ENCODE measurements at regions of chr1 and their contacts with region 1.

Region 1: DNA sequence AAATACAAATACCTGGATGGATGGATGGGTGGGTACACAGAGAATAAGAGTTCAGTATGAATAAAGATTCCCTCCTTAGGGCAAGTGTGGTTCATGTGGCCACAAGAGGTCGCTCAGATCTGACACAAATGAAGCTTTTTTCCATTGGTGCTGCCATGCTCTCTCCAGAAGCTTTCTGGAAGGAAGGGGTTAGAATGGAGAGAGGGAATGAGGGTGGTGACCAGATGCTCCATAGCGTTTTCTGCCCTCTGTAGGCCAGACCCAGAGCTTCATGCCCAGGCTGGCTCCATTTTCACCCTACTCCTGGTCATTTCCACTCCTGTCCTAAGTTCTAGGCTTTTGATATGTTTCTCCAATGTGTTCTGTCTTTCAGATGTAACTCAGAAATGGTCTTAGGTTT is 3.3 kb upstream of the FCRL6 start:
- DNase-seq: peak; percentile 72
- H3K4me3 ChIP-seq: no peak overlapping the region
- H3K27ac ChIP-seq: no peak overlapping the region
- H3K4me1 ChIP-seq: no peaks in the 10 kb centered on the region
- H3K27me3 ChIP-seq: peaks cover 10% of the 10 kb centered on the region; the same call in 1 of the 2 replicates
- CTCF ChIP-seq: peak; percentile 87
- EP300 ChIP-seq: no peak
- RAD21 ChIP-seq: peak; percentile 88

Region 2: DNA sequence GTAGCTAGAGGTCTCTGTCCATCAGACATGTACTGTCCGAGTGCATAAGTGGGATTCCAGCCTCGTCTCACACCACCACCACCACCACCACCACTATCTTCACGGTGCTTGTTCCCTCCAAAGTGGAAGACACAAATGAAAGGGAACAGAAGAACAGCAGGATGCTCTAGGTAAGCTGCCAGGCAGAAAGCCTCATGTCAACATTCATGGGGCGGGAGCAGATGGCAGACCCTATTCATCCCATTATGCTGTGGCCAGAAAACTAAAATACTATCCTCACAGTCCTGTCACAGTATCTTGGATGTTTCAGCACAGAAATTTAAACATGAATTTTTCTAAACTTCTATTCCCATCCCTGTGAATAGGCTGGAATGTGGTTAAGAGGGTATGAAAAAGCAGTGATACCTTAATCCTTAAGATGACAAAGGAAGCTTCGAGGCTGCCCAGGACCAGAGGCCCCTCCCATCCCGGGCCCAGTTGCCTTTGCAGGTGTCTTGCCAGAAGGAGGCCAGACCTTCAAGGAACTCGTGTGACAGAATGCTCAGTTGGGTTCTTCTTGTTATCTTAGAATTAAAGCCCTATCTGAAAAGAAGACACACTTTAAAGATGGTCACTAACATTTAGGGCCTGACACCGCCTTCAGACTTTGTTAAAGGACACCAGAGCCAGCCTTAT is 186.5 kb before region 1 on chr1:
- CTCF ChIA-PET with region 1: no interaction called
- POLR2A ChIA-PET with region 1: no interaction called
- DNase-seq: no peak
- H3K4me3 ChIP-seq: no peak overlapping the region
- H3K27ac ChIP-seq: no peak overlapping the region
- H3K4me1 ChIP-seq: no peaks in the 10 kb centered on the region
- H3K27me3 ChIP-seq: peaks cover 6% of the 10 kb centered on the region; the same call in 1 of the 2 replicates
- CTCF ChIP-seq: no peak
- EP300 ChIP-seq: no peak
- RAD21 ChIP-seq: no peak

Region 3: DNA sequence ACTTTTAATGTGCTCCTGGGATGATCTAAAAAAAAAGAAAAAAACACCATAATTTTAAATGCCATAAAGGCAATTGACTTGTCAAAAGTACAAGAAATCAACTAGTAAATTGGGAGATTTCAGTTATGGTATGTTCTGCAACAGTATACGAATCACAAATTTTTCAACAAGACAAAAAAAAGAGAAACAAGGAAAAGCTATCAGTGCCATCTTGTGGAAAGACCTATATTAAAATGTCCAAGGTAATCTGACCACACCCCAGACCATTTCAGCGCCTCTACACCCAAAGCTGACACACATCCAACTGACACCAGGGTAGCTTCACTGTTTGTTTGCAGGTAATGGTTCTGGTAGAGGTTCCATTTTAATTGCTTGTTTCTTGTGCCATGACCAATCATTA is 23.2 kb before region 1 on chr1:
- CTCF ChIA-PET with region 1: interaction called, 32 read pairs
- POLR2A ChIA-PET with region 1: no interaction called
- DNase-seq: no peak
- H3K4me3 ChIP-seq: no peak overlapping the region
- H3K27ac ChIP-seq: no peak overlapping the region
- H3K4me1 ChIP-seq: no peaks in the 10 kb centered on the region; a peak in 1 of 4 replicates
- H3K27me3 ChIP-seq: no peaks in the 10 kb centered on the region
- CTCF ChIP-seq: peak; percentile 33
- EP300 ChIP-seq: no peak
- RAD21 ChIP-seq: no peak

Region 4: DNA sequence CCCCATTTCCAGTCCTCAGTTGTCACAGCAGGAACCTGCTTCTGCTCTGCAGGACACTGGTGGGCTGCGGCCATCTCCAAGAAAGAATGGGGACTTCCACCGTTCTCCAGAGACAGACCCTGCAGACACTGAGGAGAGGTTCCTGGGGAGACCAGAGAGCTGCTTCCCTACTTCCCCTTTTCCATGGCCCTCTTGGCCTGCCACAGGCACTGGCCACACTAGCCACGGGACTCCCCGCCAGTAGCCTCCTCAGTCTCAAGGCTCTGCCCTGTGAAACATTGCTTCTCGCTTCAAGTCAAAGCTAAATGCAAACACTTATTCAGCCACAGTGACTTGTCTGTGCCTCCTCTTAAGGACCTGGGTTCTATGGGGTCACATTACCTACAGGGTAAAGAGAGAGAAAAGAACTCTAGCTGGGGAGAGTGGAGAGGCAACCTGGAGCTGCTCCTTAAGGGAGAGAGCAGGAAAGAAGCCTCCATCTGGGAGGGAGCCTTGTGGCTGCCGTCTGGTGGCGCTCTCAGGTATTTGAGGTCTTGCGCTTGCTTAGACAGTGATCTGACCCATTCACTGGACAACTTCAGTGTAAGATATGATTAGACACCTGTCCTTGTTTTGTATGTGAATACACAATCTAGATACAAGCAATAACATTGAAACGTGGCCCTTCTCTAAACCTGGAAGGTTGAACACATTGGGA is 22.4 kb after region 1 on chr1:
- CTCF ChIA-PET with region 1: interaction called, 84 read pairs
- POLR2A ChIA-PET with region 1: no interaction called
- DNase-seq: peak; percentile 53
- H3K4me3 ChIP-seq: no peak overlapping the region
- H3K27ac ChIP-seq: no peak overlapping the region
- H3K4me1 ChIP-seq: peaks cover 0 to 24% of the 10 kb centered on the region in 2 experiments; a peak in 1 of 4 replicates
- H3K27me3 ChIP-seq: no peaks in the 10 kb centered on the region
- CTCF ChIP-seq: peak; percentile 65
- EP300 ChIP-seq: no peak
- RAD21 ChIP-seq: peak; percentile 55

Region 5: GRCh38 chr1:159839116-159839849 is 40.4 kb after region 1 on chr1:
- CTCF ChIA-PET with region 1: interaction called, 17 read pairs
- POLR2A ChIA-PET with region 1: no interaction called
- DNase-seq: no peak
- H3K4me3 ChIP-seq: no peak overlapping the region
- H3K27ac ChIP-seq: no peak overlapping the region
- H3K4me1 ChIP-seq: peaks cover 0 to 3% of the 10 kb centered on the region in 2 experiments; a peak in 1 of 4 replicates
- H3K27me3 ChIP-seq: no peaks in the 10 kb centered on the region
- CTCF ChIP-seq: no peak
- EP300 ChIP-seq: no peak
- RAD21 ChIP-seq: no peak

Region 6: GRCh38 chr1:159881930-159882839 is 83.3 kb after region 1 on chr1:
- CTCF ChIA-PET with region 1: interaction called, 533 read pairs
- POLR2A ChIA-PET with region 1: no interaction called
- DNase-seq: peak; percentile 33
- H3K4me3 ChIP-seq: no peak overlapping the region
- H3K27ac ChIP-seq: peak overlapping the region; percentile 54 to 79; a peak in 3 of 4 replicates
- H3K4me1 ChIP-seq: peaks cover 12 to 14% of the 10 kb centered on the region in 2 experiments; a peak in 2 of 4 replicates
- H3K27me3 ChIP-seq: no peaks in the 10 kb centered on the region
- CTCF ChIP-seq: no peak
- EP300 ChIP-seq: peak in 1 of 2 experiments; percentile 76; a peak in 1 of 4 replicates
- RAD21 ChIP-seq: no peak

Region 7: DNA sequence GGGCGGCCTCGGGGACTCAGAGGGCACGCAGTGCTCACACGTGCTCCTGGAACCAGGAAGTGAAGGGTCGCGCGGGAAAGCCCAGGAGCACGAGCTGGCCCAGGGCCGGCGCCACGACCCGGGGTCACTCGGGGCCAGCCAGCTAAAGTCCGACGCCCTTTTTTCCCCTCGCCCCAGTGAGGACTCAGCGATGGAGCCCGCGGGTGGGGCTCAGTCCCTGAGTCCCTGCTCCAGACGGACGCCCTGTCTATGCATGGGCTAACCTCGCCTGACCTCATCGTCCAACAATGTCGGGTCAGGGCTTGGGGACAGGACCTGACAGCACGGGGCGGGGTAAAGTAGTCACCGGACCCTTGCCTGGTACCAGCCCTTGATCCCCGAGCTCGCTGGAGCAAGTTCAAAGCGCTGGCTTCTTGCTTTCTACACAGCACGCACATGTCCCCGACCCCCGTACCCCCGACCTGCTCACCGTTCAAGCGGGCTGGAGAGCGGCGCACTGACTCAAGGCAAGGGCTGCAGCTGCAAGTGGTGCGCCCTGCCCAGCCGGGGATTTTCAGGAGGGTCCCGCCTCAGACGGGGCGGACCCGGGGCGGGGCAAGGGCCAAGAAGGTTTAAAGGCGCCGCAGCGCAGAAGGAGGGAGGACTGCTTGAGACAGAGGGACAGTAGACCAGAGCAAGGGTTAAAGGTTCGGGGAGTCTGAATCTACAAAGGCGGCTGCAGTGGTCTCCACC is 126.3 kb after region 1 on chr1 and contains the start of gene TAGLN2:
- CTCF ChIA-PET with region 1: interaction called, 14 read pairs
- POLR2A ChIA-PET with region 1: no interaction called
- DNase-seq: peak; percentile 93
- H3K4me3 ChIP-seq: peak within 1 kb of the TSS; percentile 91 to 97
- H3K27ac ChIP-seq: peak within 1 kb of the TSS; percentile 73 to 97; a peak in 3 of 4 replicates
- H3K4me1 ChIP-seq: peaks cover 18 to 35% of the 10 kb centered on the region in 2 experiments; a peak in 2 of 4 replicates
- H3K27me3 ChIP-seq: no peaks in the 10 kb centered on the region
- CTCF ChIP-seq: no peak
- EP300 ChIP-seq: no peak
- RAD21 ChIP-seq: no peak
- polyA plus RNA-seq, gene TAGLN2: 625 and 646 TPM in 2 replicates

Region 8: DNA sequence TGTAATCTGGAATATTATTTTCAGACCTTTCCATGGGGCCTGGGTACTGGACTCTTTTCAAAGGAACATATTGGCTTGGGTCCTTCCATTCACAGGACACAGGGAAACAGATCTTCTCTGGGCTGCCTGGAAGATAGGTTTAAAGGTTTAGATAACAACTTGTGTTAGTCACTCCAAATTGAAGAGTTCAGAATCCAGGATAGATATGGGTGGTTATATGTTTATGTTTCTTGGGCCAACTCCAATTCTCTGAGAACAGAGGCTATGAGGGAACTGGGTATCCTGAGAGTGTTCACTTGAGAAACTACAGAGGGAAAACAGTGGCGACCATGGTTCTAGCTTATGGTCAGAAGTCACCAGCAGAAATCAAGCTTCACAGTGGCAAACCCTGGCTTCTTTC is 241.6 kb after region 1 on chr1:
- CTCF ChIA-PET with region 1: no interaction called
- POLR2A ChIA-PET with region 1: no interaction called
- DNase-seq: no peak
- H3K4me3 ChIP-seq: no peak overlapping the region
- H3K27ac ChIP-seq: no peak overlapping the region
- H3K4me1 ChIP-seq: no peaks in the 10 kb centered on the region
- H3K27me3 ChIP-seq: peaks cover 13% of the 10 kb centered on the region; the same call in 1 of the 2 replicates
- CTCF ChIP-seq: no peak
- EP300 ChIP-seq: no peak
- RAD21 ChIP-seq: no peak

Measured in SK-N-SH (cell line).